ENCODE measurements at regions of chr17 and their contacts with region 1.

Region 1: GRCh38 chr17:80454557-80455335 is 21.7 kb downstream of the NPTX1 start:
- DNase-seq: peak; percentile 96
- H3K4me3 Mint-ChIP-seq: peak overlapping the region; percentile 85
- H3K27ac Mint-ChIP-seq: peak overlapping the region; percentile 89
- H3K4me1 Mint-ChIP-seq: peaks cover 48% of the 10 kb centered on the region
- H3K27me3 Mint-ChIP-seq: peaks cover 18% of the 10 kb centered on the region

Region 2: GRCh38 chr17:80468242-80468641 is 13.5 kb after region 1 on chr17:
- CTCF ChIA-PET with region 1: no interaction called
- POLR2A ChIA-PET with region 1: interaction called, 21 read pairs
- DNase-seq: no peak
- H3K4me3 Mint-ChIP-seq: no peak overlapping the region
- H3K27ac Mint-ChIP-seq: no peak overlapping the region
- H3K4me1 Mint-ChIP-seq: peaks cover 10% of the 10 kb centered on the region
- H3K27me3 Mint-ChIP-seq: peaks cover 58% of the 10 kb centered on the region

Region 3: GRCh38 chr17:80474231-80474960 is 19.6 kb after region 1 on chr17:
- CTCF ChIA-PET with region 1: interaction called, 7 read pairs
- POLR2A ChIA-PET with region 1: interaction called, 16 read pairs
- DNase-seq: no peak
- H3K4me3 Mint-ChIP-seq: peak overlapping the region; percentile 48
- H3K27ac Mint-ChIP-seq: no peak overlapping the region
- H3K4me1 Mint-ChIP-seq: peaks cover 24% of the 10 kb centered on the region
- H3K27me3 Mint-ChIP-seq: peaks cover 57% of the 10 kb centered on the region

Region 4: DNA sequence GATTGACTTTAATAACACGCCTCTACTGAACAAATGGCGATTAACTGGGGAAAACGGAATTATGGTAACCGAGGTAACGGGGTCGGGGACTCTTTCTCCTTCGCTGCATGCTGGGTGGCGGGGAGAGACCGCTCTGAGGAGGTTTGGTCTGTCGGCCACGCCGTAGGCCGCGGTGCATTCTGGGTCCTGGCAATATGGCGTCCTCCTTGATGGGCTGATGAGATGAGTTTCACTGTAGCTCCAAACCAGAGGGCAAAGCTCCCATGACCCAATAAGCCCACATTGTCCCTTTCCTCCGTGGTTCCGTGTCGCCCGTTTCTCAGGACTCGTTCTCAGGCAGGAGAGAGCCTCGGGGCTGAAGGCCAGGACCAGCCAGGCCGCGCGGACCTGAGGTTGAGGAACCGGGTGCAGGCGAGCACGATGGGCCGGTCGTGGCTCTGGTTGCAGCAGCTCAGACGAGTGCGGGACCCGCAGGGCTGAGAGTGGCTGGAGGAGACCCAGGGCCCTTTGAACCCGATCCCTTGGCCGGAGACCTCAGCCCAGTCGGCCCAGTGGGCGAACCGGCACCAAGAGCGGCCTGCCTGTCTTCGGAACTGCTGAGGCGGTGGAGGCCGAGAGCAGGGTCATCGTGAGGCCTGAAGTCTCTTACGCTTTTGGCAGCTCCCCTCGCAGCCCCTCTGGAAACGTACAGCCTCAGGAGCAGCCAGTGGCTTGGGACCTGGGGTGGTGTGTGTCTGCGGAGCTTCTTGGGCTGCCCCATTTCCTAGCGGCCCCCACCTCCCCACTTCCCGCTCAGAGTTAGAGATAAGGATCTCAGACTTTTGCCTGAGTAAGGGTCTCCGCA is 90.1 kb after region 1 on chr17 and contains the start of gene RPTOR:
- CTCF ChIA-PET with region 1: no interaction called
- POLR2A ChIA-PET with region 1: interaction called, 27 read pairs
- DNase-seq: peak; percentile 92
- H3K4me3 Mint-ChIP-seq: peak within 1 kb of the TSS; percentile 87
- H3K27ac Mint-ChIP-seq: peak within 1 kb of the TSS; percentile 78
- H3K4me1 Mint-ChIP-seq: peaks cover 33% of the 10 kb centered on the region
- H3K27me3 Mint-ChIP-seq: peaks cover 8% of the 10 kb centered on the region
- total RNA-seq, gene RPTOR: 88.9 to 91.8 TPM

Region 5: DNA sequence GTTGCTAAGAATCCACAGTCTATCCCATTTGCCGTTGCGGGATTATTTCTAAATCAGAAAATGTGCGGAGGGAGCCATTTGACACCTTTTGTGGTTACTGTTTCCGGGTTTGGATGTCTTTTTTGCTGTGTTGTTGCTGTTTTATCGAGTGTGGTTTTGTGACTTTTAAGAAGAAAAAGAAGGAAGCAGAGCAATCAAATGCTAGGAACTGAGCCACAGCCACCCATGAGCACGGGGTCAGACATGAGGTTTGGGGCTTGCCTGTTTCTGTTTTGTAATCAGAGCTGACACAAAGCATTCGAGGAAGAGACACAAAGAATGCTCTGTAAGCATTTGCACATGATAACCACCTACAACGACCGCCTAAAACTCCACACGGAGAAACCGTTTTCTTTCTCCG is 483.8 kb after region 1 on chr17:
- CTCF ChIA-PET with region 1: no interaction called
- POLR2A ChIA-PET with region 1: interaction called, 12 read pairs
- DNase-seq: peak; percentile 84
- H3K4me3 Mint-ChIP-seq: peak overlapping the region; percentile 42
- H3K27ac Mint-ChIP-seq: peak overlapping the region; percentile 81
- H3K4me1 Mint-ChIP-seq: peaks cover 53% of the 10 kb centered on the region
- H3K27me3 Mint-ChIP-seq: no peaks in the 10 kb centered on the region